CD14-positive monocyte (primary cell): ENCODE measurements at regions of chr12 and their contacts with region 1.

Region 1: DNA sequence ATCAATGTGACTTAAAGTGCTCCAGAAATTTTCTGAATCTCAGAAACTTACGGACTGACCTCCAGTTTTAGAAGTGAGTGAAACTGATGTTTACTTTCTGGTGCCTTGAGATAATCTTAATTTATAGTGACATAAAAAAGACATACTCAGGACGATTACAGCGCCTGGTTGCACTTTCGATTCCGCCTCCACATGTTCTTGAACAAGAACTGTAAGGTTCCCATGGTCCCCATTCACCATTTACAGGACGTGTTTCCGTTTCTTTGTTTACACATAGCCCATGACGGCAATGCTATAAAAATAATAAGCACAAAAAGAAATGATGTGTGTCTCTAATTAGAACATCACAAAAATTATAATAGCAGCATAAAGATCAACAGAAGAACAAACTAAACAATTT is 98.2 kb downstream of the ADAMTS20 start:
- DNase-seq: no peak
- H3K4me3 ChIP-seq: no peak overlapping the region
- H3K4me3 Mint-ChIP-seq: no peak overlapping the region
- H3K27ac ChIP-seq: no peak overlapping the region
- H3K27ac Mint-ChIP-seq: no peak overlapping the region
- H3K4me1 ChIP-seq: no peaks in the 10 kb centered on the region
- H3K4me1 Mint-ChIP-seq: no peaks in the 10 kb centered on the region
- H3K27me3 ChIP-seq: no peaks in the 10 kb centered on the region
- H3K27me3 Mint-ChIP-seq: peaks cover 0 to 3% (median 0%) of the 10 kb centered on the region in 3 donors
- CTCF ChIP-seq: no peak

Region 2: GRCh38 chr12:42679466-42679865 is 774.3 kb before region 1 on chr12:
- intact Hi-C with region 1: loop called in 1 of 2 experiments (anchors 10 kb)
- DNase-seq: no peak
- H3K4me3 ChIP-seq: no peak overlapping the region
- H3K4me3 Mint-ChIP-seq: no peak overlapping the region
- H3K27ac ChIP-seq: no peak overlapping the region
- H3K27ac Mint-ChIP-seq: no peak overlapping the region
- H3K4me1 ChIP-seq: no peaks in the 10 kb centered on the region
- H3K4me1 Mint-ChIP-seq: no peaks in the 10 kb centered on the region
- H3K27me3 ChIP-seq: no peaks in the 10 kb centered on the region
- H3K27me3 Mint-ChIP-seq: peaks cover 2 to 3% (median 3%) of the 10 kb centered on the region in 3 donors
- CTCF ChIP-seq: no peak

Region 3: GRCh38 chr12:43493261-43493797 is 39.6 kb after region 1 on chr12:
- intact Hi-C with region 1: no loop called
- DNase-seq: no peak
- H3K4me3 ChIP-seq: no peak overlapping the region
- H3K4me3 Mint-ChIP-seq: no peak overlapping the region
- H3K27ac ChIP-seq: no peak overlapping the region
- H3K27ac Mint-ChIP-seq: no peak overlapping the region
- H3K4me1 ChIP-seq: no peaks in the 10 kb centered on the region
- H3K4me1 Mint-ChIP-seq: no peaks in the 10 kb centered on the region
- H3K27me3 ChIP-seq: no peaks in the 10 kb centered on the region
- H3K27me3 Mint-ChIP-seq: no peaks in the 10 kb centered on the region
- CTCF ChIP-seq: no peak

Region 4: DNA sequence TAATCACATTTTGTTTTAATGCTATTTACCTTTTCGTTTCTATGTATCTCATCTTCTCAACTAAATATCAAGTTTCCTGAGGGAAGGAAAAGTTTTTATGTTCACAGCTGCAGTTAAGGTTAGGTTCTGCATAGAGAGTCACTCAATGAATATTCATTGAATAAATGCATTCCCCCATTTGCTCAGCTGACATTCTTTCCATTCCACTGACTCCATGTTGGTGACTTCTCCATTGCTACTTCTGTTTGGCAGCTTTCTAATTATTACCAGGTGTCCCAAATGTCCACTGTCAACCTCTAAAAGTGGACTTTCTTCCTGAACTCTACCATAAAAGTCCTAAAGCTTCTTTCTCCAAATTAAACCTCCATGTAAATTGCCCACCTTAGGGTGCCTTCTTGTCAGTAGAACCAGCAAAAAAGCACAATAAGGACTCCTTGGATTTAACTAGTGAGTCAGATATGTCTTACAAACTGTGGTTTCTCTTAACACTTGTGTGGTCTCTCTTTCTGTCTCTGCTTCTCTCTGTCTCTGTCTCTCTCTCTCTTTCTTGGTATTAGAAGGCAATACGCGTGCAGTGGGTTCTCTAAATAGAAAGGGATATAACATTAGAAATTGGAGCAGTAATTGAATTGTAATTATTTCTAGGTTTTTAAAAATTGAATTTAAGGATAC is 468.0 kb after region 1 on chr12:
- intact Hi-C with region 1: no loop called
- DNase-seq: no peak
- H3K4me3 ChIP-seq: no peak overlapping the region
- H3K4me3 Mint-ChIP-seq: no peak overlapping the region
- H3K27ac ChIP-seq: no peak overlapping the region
- H3K27ac Mint-ChIP-seq: no peak overlapping the region
- H3K4me1 ChIP-seq: no peaks in the 10 kb centered on the region
- H3K4me1 Mint-ChIP-seq: no peaks in the 10 kb centered on the region
- H3K27me3 ChIP-seq: no peaks in the 10 kb centered on the region
- H3K27me3 Mint-ChIP-seq: peaks cover 0 to 4% (median 0%) of the 10 kb centered on the region in 3 donors
- CTCF ChIP-seq: no peak